CD14-positive monocyte (primary cell): ENCODE measurements at regions of chr15 and their contacts with region 1.

Region 1: GRCh38 chr15:90869601-90870353 is 1.4 kb downstream of the FURIN start:
- DNase-seq: peak; percentile 78 to 97 (median 93)
- H3K4me3 ChIP-seq: peak overlapping the region in 1 of 3 experiments; percentile 86
- H3K4me3 Mint-ChIP-seq: peak overlapping the region; percentile 87 to 93
- H3K27ac ChIP-seq: peak overlapping the region; percentile 65 to 91
- H3K27ac Mint-ChIP-seq: peak overlapping the region; percentile 91 to 96 (median 92)
- H3K4me1 ChIP-seq: peaks cover 58 to 84% of the 10 kb centered on the region in 2 donors
- H3K4me1 Mint-ChIP-seq: peaks cover 69% of the 10 kb centered on the region
- H3K27me3 ChIP-seq: no peaks in the 10 kb centered on the region
- H3K27me3 Mint-ChIP-seq: peaks cover 0 to 2% (median 0%) of the 10 kb centered on the region in 3 donors
- CTCF ChIP-seq: no peak

Region 2: DNA sequence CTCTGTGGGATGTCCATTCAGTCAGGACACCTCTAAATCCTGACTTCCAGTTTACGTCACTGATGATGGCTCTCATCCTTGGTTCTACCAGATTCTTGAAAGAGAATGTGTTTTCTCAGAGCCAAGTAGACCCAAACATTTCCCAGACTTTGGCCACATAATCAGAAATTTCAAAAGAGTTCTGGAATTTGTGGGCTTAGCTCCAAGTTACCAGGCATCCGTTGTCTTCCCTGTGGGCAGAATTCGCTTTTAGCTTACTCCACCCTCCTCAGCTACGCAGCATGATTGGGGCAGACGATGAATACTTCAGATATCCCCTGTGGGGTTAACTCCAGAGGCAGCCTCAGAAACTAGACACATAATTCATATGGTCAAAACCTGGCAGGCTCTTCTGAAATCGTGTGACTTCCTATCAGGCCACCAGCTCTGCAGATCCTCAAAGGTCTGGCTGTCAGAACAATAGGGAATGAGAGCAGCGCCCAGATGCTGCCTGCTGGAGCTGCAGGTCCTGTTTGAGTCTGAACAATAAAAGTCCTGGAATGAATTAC is 309.5 kb before region 1 on chr15:
- intact Hi-C with region 1: loop called in 1 of 2 experiments (anchors 10 kb)
- DNase-seq: no peak
- H3K4me3 ChIP-seq: no peak overlapping the region
- H3K4me3 Mint-ChIP-seq: no peak overlapping the region
- H3K27ac ChIP-seq: no peak overlapping the region
- H3K27ac Mint-ChIP-seq: no peak overlapping the region
- H3K4me1 ChIP-seq: peaks cover 60 to 64% of the 10 kb centered on the region in 2 donors
- H3K4me1 Mint-ChIP-seq: peaks cover 67% of the 10 kb centered on the region
- H3K27me3 ChIP-seq: no peaks in the 10 kb centered on the region
- H3K27me3 Mint-ChIP-seq: peaks cover 0 to 3% (median 0%) of the 10 kb centered on the region in 3 donors
- CTCF ChIP-seq: no peak

Region 3: GRCh38 chr15:90762109-90762508 is 107.7 kb before region 1 on chr15:
- intact Hi-C with region 1: loop called in 1 of 2 experiments (anchors 5 kb)
- DNase-seq: peak; percentile 93 to 97 (median 96)
- H3K4me3 ChIP-seq: peak overlapping the region in 2 of 3 experiments; percentile 10 to 23
- H3K4me3 Mint-ChIP-seq: peak overlapping the region; percentile 40 to 74
- H3K27ac ChIP-seq: peak overlapping the region; percentile 34 to 79
- H3K27ac Mint-ChIP-seq: peak overlapping the region; percentile 86 to 96 (median 92)
- H3K4me1 ChIP-seq: peaks cover 16 to 21% of the 10 kb centered on the region in 2 donors
- H3K4me1 Mint-ChIP-seq: peaks cover 28% of the 10 kb centered on the region
- H3K27me3 ChIP-seq: no peaks in the 10 kb centered on the region
- H3K27me3 Mint-ChIP-seq: peaks cover 0 to 1% (median 0%) of the 10 kb centered on the region in 3 donors
- CTCF ChIP-seq: no peak

Region 4: DNA sequence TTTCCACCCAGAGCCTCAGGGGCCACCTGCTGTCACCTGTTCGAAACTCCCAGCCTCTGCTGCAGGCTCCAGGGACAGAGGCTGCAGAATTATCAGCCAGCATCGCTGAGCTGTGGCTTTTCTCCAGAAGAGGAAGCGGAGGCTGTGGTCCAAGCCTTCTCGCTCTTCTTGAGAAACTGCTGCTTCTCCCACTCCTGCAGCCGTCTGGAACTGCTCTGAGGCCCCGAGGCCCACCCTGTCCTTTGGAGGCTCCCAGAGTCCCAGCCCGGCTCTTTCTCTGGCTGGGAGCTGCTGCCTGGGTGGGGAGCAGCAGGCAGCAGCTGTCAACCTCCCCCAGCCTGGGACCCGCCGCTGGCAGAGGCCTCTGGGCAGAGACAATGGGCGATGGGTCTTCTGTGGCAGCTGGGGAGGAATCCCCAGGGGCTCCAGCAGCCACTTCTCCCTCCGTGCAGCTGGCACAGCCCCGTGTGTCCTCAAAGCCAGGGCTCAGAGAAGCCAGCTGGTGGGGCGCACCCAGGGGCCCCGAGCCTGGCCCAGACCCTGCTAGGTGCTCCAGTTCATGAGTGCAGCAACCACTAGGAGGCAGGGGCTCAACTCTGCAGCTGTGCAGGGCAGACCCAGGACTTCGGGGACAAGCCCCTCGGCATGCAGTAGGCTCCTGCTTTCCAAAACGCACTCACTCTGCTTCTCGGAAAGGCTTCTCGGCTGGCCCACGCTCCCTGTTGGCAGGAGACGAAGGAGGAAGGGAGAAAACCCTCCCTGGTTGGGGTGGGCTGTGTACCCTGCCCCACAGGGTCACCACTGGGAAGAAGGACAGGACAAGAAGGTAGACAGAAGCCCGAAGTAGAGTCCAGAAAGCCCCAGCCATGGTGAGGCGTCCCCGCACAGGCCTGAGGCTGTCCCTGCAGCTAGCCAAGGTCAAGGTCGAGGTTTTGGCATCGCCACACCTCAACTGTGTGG is 51.2 kb before region 1 on chr15:
- intact Hi-C with region 1: loop called in 1 of 2 experiments (anchors 10 kb)
- DNase-seq: peak; percentile 42 to 68 (median 45)
- H3K4me3 ChIP-seq: peak overlapping the region in 1 of 3 experiments; percentile 66
- H3K4me3 Mint-ChIP-seq: peak overlapping the region; percentile 16 to 64
- H3K27ac ChIP-seq: peak overlapping the region; percentile 2 to 54
- H3K27ac Mint-ChIP-seq: peak overlapping the region in 4 of 7 donors; percentile 60 to 81 (median 72)
- H3K4me1 ChIP-seq: peaks cover 18 to 41% of the 10 kb centered on the region in 2 donors
- H3K4me1 Mint-ChIP-seq: peaks cover 34% of the 10 kb centered on the region
- H3K27me3 ChIP-seq: no peaks in the 10 kb centered on the region
- H3K27me3 Mint-ChIP-seq: peaks cover 0 to 7% (median 4%) of the 10 kb centered on the region in 3 donors
- CTCF ChIP-seq: peak; percentile 60

Region 5: DNA sequence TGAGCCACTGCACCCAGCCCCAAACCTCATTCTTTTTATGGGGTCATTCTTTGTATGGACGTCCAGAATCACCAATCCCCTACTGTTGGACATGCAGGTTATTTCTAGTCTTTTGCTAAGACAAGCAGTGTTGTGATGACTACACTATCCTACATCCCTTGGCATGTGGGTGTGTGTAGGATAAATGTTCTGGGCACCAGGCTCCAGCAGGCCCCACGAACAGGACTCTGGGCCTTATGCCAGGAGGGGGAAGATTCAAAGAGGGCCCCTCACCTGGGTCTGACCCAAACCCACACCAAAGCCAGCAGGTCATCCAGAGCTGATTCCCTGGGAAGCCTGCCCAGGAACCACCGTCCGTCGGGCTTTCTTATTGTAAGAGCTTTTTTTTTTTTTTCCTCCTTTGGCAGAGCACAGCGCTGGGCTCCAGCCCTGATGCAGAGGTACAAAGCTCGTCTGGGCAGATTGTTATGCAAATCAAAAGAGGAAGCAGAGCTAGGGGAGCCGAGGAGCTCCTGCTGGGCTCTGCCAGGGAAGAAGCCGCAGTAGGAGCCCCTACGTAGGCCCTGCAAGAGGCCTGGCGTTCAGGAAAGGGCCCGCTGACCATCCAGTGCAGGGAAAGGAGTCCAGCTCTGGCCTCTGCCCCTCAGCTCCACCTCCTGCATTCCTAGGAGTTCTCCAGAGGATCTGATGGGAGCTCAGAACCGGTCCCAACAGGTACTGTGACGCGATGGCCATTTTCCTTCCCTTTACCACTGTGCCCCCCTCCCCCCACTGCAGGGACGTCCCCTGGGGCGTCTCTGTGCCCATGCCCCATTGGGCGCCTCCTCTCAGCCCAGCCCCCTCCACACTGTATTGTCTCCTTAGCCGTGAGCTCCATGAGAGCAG is 30.3 kb before region 1 on chr15:
- intact Hi-C with region 1: loop called (anchors 5 kb)
- DNase-seq: peak; percentile 73 to 88 (median 80)
- H3K4me3 ChIP-seq: peak overlapping the region; percentile 30 to 69 (median 32)
- H3K4me3 Mint-ChIP-seq: peak overlapping the region; percentile 75 to 91
- H3K27ac ChIP-seq: peak overlapping the region; percentile 85 to 88
- H3K27ac Mint-ChIP-seq: peak overlapping the region; percentile 88 to 97 (median 93)
- H3K4me1 ChIP-seq: peaks cover 72 to 89% of the 10 kb centered on the region in 2 donors
- H3K4me1 Mint-ChIP-seq: peaks cover 84% of the 10 kb centered on the region
- H3K27me3 ChIP-seq: no peaks in the 10 kb centered on the region
- H3K27me3 Mint-ChIP-seq: peaks cover 1 to 5% (median 3%) of the 10 kb centered on the region in 3 donors
- CTCF ChIP-seq: no peak

Region 6: DNA sequence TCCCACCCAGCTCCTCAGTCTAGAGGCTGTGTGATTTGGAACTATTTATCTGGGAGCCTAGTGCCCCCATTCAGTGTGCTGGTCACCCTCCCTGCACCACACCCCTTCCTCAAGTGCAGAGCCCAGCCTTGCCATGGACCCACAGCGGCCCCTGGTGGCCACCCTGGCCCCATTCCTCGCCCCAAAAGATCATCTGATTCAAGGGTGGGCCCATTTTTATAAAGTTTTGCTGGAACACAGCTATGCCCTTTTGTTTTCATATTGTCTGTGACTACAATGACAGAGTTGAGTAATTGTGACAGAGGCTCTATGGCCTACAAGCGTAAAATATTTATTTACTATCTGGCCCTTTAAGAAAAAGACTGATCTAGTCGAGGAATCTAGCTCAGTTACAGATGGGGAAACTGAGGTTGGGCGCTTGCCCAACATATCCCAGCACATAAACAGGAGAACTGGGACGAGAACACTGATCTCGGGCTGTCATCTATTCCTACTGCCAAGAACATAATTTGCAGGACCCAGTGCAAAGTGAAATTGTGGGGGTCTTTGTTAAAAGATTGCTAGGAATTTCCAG is 16.4 kb after region 1 on chr15:
- intact Hi-C with region 1: loop called in 1 of 2 experiments (anchors 2 kb)
- DNase-seq: peak; percentile 70 to 78 (median 71)
- H3K4me3 ChIP-seq: peak overlapping the region; percentile 69 to 99 (median 95)
- H3K4me3 Mint-ChIP-seq: peak overlapping the region; percentile 93 to 98
- H3K27ac ChIP-seq: peak overlapping the region; percentile 78 to 88
- H3K27ac Mint-ChIP-seq: peak overlapping the region; percentile 81 to 96 (median 94)
- H3K4me1 ChIP-seq: peaks cover 31 to 56% of the 10 kb centered on the region in 2 donors
- H3K4me1 Mint-ChIP-seq: peaks cover 42% of the 10 kb centered on the region
- H3K27me3 ChIP-seq: no peaks in the 10 kb centered on the region
- H3K27me3 Mint-ChIP-seq: peaks cover 0 to 1% (median 0%) of the 10 kb centered on the region in 3 donors
- CTCF ChIP-seq: peak; percentile 100